MCF 10A (cell line): ENCODE measurements at regions of chr11 and their contacts with region 1.

Region 1: DNA sequence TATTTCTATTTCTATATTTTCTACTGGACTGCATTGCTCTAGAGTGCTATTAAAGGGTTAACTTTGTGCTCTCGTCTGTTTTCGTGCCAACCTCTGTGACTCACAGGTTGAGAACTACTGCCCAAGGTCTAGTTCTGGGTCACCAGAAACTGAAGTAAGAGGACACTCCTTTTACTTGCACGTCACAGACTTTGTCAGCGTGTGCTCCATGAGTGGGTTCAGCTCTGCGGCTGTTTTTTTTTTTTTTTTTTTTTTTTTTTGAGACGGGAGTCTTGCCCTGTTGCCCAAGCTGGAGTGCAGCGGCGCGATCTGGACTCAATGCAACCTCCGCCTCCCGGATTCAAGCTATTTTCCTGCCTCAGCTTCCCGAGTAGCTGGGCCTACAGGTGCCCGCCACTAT is 49.8 kb downstream of the CLMP start:
- DNase-seq: peak; percentile 99
- H3K4me3 Mint-ChIP-seq: peak overlapping the region; percentile 57
- H3K27ac Mint-ChIP-seq: peak overlapping the region; percentile 72
- H3K4me1 Mint-ChIP-seq: peaks cover 27% of the 10 kb centered on the region
- H3K27me3 Mint-ChIP-seq: no peaks in the 10 kb centered on the region
- CTCF ChIP-seq: no peak

Region 2: GRCh38 chr11:123122341-123122740 is 22.9 kb before region 1 on chr11:
- CTCF ChIA-PET with region 1: interaction called, 3 read pairs
- POLR2A ChIA-PET with region 1: interaction called, 10 read pairs
- intact Hi-C with region 1: loop called (anchors 2 kb)
- DNase-seq: peak; percentile 97
- H3K4me3 Mint-ChIP-seq: peak overlapping the region; percentile 59
- H3K27ac Mint-ChIP-seq: peak overlapping the region; percentile 97
- H3K4me1 Mint-ChIP-seq: peaks cover 30% of the 10 kb centered on the region
- H3K27me3 Mint-ChIP-seq: no peaks in the 10 kb centered on the region
- CTCF ChIP-seq: no peak